Activated B cell treated with CpG ODN at 0.5 μM for 24 hours (primary cell): ENCODE measurements at regions of chr2 and their contacts with region 1.

Region 1: GRCh38 chr2:169528271-169528701 is 18.8 kb downstream of the KLHL41 start:
- DNase-seq: peak; percentile 45
- ATAC-seq: peak; percentile 79
- H3K4me3 Mint-ChIP-seq: no peak overlapping the region
- H3K27ac Mint-ChIP-seq: no peak overlapping the region
- H3K4me1 Mint-ChIP-seq: no peaks in the 10 kb centered on the region
- H3K27me3 Mint-ChIP-seq: no peaks in the 10 kb centered on the region
- CTCF ChIP-seq: peak; percentile 94

Region 2: GRCh38 chr2:169877398-169877797 is 349.1 kb after region 1 on chr2:
- CTCF ChIA-PET with region 1: interaction called, 3 read pairs
- POLR2A ChIA-PET with region 1: no interaction called
- intact Hi-C with region 1: loop called (anchors 1 kb)
- DNase-seq: no peak
- ATAC-seq: no peak
- H3K4me3 Mint-ChIP-seq: no peak overlapping the region
- H3K27ac Mint-ChIP-seq: no peak overlapping the region
- H3K4me1 Mint-ChIP-seq: peaks cover 2% of the 10 kb centered on the region
- H3K27me3 Mint-ChIP-seq: no peaks in the 10 kb centered on the region
- CTCF ChIP-seq: no peak

Region 3: GRCh38 chr2:169933124-169933711 is 404.9 kb after region 1 on chr2:
- CTCF ChIA-PET with region 1: interaction called, 12 read pairs
- POLR2A ChIA-PET with region 1: no interaction called
- intact Hi-C with region 1: loop called (anchors 1 kb)
- DNase-seq: no peak
- ATAC-seq: peak; percentile 52
- H3K4me3 Mint-ChIP-seq: no peak overlapping the region
- H3K27ac Mint-ChIP-seq: no peak overlapping the region
- H3K4me1 Mint-ChIP-seq: no peaks in the 10 kb centered on the region
- H3K27me3 Mint-ChIP-seq: no peaks in the 10 kb centered on the region
- CTCF ChIP-seq: no peak